PC-3 (cell line): ENCODE measurements at regions of chr1 and their contacts with region 1.

Region 1: DNA sequence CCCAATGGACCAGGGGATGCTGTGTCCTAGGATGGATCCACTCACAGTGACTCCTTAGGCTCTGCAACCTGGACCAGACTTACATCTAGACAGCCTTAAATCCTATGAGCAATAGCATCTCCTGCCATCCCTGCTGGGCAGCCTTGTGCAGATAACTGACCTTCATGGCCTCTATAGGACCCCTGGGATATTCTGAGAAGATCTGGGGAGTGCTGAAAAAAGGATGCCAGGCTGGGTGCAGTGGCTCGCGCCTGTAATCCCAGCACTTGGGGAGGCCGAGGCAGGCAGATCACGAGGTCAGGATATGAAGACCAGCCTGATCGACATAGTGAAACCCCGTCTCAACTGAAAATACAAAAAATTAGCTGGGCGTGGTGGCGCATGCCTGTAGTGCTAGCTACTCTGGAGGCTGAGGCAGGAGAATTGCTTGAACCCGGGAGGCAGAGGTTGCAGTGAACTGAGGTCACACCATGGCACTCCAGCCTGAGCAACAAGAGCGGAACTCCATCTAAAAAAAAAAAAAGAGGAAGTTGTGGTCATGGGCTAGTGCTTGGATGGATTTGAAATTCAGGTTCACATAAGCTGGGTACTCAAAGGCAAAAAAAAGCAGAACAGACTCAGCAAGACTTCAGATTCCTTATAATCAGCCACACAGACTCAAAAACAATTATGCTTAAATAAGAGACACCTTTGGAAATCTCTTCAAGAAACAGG is 10.9 kb upstream of the SH2D1B start:
- DNase-seq: no peak
- ATAC-seq: no peak
- H3K4me3 ChIP-seq: no peak overlapping the region
- H3K27ac ChIP-seq: no peak overlapping the region
- H3K4me1 ChIP-seq: peaks cover 16% of the 10 kb centered on the region; the same call in 1 of the 2 replicates
- H3K27me3 ChIP-seq: no peaks in the 10 kb centered on the region
- CTCF ChIP-seq: no peak

Region 2: DNA sequence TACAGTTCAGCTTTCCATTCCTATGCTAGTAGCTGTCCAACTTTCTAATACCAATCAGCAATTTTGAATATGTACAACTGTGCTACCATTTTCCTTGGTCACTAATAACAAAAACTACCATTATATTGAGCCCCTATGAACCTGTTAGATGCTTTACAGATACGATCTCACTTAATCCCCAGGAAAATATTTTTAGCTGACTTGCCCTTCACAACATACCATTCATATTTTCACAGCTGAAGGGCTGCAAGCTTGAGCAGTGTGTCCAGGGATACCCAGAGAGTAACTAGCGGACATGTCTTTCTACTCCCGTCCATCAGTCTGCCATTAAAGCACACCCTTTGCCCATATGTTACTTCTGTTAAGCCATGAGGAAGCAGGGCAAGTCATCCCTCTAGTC is 186.6 kb before region 1 on chr1:
- CTCF ChIA-PET with region 1: no interaction called
- POLR2A ChIA-PET with region 1: no interaction called
- intact Hi-C with region 1: no loop called
- DNase-seq: no peak
- ATAC-seq: no peak
- H3K4me3 ChIP-seq: no peak overlapping the region
- H3K27ac ChIP-seq: no peak overlapping the region
- H3K4me1 ChIP-seq: no peaks in the 10 kb centered on the region
- H3K27me3 ChIP-seq: no peaks in the 10 kb centered on the region
- CTCF ChIP-seq: no peak

Region 3: DNA sequence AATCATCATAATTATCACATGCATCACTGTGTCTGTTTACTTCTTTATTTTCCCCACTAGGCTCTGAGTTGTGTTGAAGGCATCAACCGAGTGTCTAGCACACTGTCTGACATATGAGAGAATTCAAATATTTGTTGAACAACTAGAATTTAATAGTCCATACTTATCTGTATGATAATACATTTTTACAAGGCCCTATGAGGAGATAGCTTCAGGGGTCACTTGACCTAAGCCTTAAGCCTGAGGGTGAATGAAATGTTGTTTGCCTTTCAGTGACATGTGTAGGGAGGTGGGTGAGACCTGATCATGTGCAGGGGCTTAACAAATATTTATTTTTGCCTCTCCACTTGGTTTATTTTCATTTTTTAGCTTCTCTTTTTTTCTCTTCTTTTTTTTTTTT is 14.8 kb before region 1 on chr1:
- CTCF ChIA-PET with region 1: no interaction called
- POLR2A ChIA-PET with region 1: interaction called, 12 read pairs
- intact Hi-C with region 1: no loop called
- DNase-seq: no peak
- ATAC-seq: no peak
- H3K4me3 ChIP-seq: no peak overlapping the region
- H3K27ac ChIP-seq: no peak overlapping the region
- H3K4me1 ChIP-seq: peaks cover 25% of the 10 kb centered on the region
- H3K27me3 ChIP-seq: no peaks in the 10 kb centered on the region
- CTCF ChIP-seq: no peak

Region 4: DNA sequence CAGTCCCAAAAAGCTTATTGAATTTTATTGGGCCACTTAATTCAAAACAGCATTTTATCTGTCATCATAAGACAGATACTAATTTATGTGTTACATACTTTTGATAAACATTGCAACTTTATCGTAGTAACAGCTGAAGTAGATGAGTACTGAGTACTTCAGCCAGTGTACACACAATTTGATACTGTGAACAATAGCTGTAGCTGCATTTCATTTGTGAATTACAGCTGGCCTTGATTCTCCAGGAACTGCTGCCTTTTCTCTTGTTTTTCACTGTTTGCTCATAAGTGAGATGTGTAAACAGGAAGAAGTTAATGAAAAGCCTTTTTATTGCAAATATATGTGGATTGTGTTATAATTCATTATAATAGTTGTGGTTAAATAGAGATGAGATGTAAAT is 148.9 kb after region 1 on chr1:
- CTCF ChIA-PET with region 1: no interaction called
- POLR2A ChIA-PET with region 1: no interaction called
- intact Hi-C with region 1: no loop called
- DNase-seq: no peak
- ATAC-seq: peak; percentile 39
- H3K4me3 ChIP-seq: no peak overlapping the region
- H3K27ac ChIP-seq: no peak overlapping the region
- H3K4me1 ChIP-seq: peaks cover 15% of the 10 kb centered on the region
- H3K27me3 ChIP-seq: no peaks in the 10 kb centered on the region
- CTCF ChIP-seq: no peak